ENCODE measurements at regions of chr17 and their contacts with region 1.

Region 1: GRCh38 chr17:36133602-36134236 is 30.1 kb downstream of the CCL4 start:
- DNase-seq: peak; percentile 44
- H3K4me3 Mint-ChIP-seq: no peak overlapping the region
- H3K27ac Mint-ChIP-seq: no peak overlapping the region
- H3K4me1 Mint-ChIP-seq: no peaks in the 10 kb centered on the region
- H3K27me3 Mint-ChIP-seq: peaks cover 85% of the 10 kb centered on the region
- CTCF ChIP-seq: no peak

Region 2: GRCh38 chr17:35930211-35931065 is 203.3 kb before region 1 on chr17 and contains the start of gene RDM1:
- CTCF ChIA-PET with region 1: no interaction called
- POLR2A ChIA-PET with region 1: no interaction called
- intact Hi-C with region 1: no loop called
- DNase-seq: peak; percentile 85
- H3K4me3 Mint-ChIP-seq: peak within 1 kb of the TSS; percentile 79
- H3K27ac Mint-ChIP-seq: no peak within 1 kb of the TSS
- H3K4me1 Mint-ChIP-seq: no peaks in the 10 kb centered on the region
- H3K27me3 Mint-ChIP-seq: no peaks in the 10 kb centered on the region
- CTCF ChIP-seq: no peak
- total RNA-seq, gene RDM1: 0.44 and 2.6 TPM in 2 replicates

Region 3: DNA sequence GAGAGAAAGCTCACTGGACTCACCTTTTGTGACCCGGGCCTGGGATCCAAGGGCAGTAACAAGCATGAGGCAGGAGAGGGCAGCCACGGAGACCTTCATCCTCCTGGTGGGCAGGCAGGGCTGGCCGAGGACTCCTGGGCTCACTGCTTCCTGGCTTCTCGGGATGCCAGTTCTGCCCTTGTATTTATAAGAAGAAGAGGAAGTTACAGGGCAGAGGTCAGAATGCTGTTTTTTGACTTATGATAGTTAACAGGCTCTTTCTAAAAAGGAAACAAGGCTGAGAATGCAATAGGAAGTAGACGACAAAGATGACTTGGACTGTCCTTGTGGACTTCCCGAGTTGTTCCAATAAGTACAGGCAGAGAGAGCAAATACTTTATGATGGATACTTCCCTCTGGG is 115.9 kb before region 1 on chr17 and contains the start of gene CCL23:
- CTCF ChIA-PET with region 1: no interaction called
- POLR2A ChIA-PET with region 1: no interaction called
- intact Hi-C with region 1: loop called (anchors 10 kb)
- DNase-seq: no peak
- H3K4me3 Mint-ChIP-seq: no peak within 1 kb of the TSS
- H3K27ac Mint-ChIP-seq: no peak within 1 kb of the TSS
- H3K4me1 Mint-ChIP-seq: no peaks in the 10 kb centered on the region
- H3K27me3 Mint-ChIP-seq: peaks cover 68% of the 10 kb centered on the region
- CTCF ChIP-seq: no peak
- total RNA-seq, gene CCL23: not detected in 2 replicates

Region 4: GRCh38 chr17:36072431-36073121 is 61.1 kb before region 1 on chr17:
- CTCF ChIA-PET with region 1: interaction called, 4 read pairs
- POLR2A ChIA-PET with region 1: no interaction called
- intact Hi-C with region 1: loop called (anchors 10 kb)
- DNase-seq: peak; percentile 60
- H3K4me3 Mint-ChIP-seq: no peak overlapping the region
- H3K27ac Mint-ChIP-seq: no peak overlapping the region
- H3K4me1 Mint-ChIP-seq: no peaks in the 10 kb centered on the region
- H3K27me3 Mint-ChIP-seq: peaks cover 16% of the 10 kb centered on the region
- CTCF ChIP-seq: peak; percentile 54

Region 5: DNA sequence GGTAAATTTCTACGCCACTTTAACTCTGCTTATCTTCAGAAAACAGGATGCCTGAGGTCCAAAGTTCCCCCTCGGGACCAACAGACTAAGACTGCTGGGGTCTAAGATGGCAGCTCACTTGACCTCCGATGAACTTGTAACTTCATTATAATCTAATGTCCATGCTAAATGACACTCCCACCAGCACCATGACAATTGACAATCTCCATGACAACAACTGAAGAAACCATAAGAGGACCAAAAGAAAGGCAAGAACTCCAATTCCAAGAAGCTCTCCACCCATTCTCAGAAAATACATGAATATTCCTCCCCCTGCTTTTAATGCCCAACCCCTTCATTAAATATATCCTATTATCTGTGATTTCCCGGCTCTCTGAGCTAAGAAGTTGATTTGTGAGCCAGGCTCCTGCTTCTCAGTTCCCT is 22.6 kb before region 1 on chr17:
- CTCF ChIA-PET with region 1: no interaction called
- POLR2A ChIA-PET with region 1: no interaction called
- intact Hi-C with region 1: no loop called
- DNase-seq: no peak
- H3K4me3 Mint-ChIP-seq: no peak overlapping the region
- H3K27ac Mint-ChIP-seq: no peak overlapping the region
- H3K4me1 Mint-ChIP-seq: peaks cover 6% of the 10 kb centered on the region
- H3K27me3 Mint-ChIP-seq: peaks cover 35% of the 10 kb centered on the region
- CTCF ChIP-seq: no peak

Measured in MCF 10A (cell line).